PC-9 (cell line): ENCODE measurements at regions of chr3 and their contacts with region 1.

Region 1: DNA sequence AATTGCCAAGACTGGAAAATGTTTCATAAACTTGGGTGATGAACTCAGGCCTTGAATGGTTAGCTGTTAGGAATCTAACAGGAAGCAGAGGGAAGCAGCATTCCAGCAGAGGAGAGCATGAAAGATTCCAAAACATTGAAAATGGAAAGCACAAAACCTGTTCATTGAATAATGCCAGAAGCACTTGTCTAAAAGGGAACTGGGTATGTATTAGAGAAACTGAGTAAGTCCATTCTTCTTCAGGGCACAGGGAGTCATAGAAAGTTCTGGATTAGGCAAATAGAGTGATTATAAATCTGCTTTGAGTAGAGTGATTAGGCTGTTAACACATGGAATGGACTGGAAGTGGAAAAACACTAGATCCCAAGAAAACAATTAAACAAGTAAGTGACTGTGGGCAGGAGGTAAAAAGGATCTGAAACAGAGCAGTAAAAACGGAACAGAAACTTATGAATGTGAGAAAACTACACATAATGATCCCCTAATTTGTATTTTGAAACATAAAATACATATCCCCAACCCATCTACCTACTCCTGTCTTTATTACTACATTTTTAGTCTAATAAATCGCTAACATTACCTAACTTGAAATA is 343.4 kb downstream of the TBC1D5 start:
- DNase-seq: no peak
- H3K4me3 ChIP-seq: no peak overlapping the region
- H3K27ac ChIP-seq: no peak overlapping the region
- H3K4me1 ChIP-seq: no peaks in the 10 kb centered on the region
- H3K27me3 ChIP-seq: no peaks in the 10 kb centered on the region
- CTCF ChIP-seq: no peak

Region 2: GRCh38 chr3:16589867-16590624 is 809.0 kb before region 1 on chr3:
- CTCF ChIA-PET with region 1: no interaction called
- POLR2A ChIA-PET with region 1: no interaction called
- intact Hi-C with region 1: loop called (anchors 10 kb)
- DNase-seq: no peak
- H3K4me3 ChIP-seq: no peak overlapping the region
- H3K27ac ChIP-seq: no peak overlapping the region
- H3K4me1 ChIP-seq: no peaks in the 10 kb centered on the region
- H3K27me3 ChIP-seq: no peaks in the 10 kb centered on the region
- CTCF ChIP-seq: no peak